ENCODE measurements at regions of chr14 and their contacts with region 1.

Region 1: GRCh38 chr14:52299692-52300278 is 14.3 kb upstream of the PTGER2 start:
- DNase-seq: peak; percentile 43

Region 2: DNA sequence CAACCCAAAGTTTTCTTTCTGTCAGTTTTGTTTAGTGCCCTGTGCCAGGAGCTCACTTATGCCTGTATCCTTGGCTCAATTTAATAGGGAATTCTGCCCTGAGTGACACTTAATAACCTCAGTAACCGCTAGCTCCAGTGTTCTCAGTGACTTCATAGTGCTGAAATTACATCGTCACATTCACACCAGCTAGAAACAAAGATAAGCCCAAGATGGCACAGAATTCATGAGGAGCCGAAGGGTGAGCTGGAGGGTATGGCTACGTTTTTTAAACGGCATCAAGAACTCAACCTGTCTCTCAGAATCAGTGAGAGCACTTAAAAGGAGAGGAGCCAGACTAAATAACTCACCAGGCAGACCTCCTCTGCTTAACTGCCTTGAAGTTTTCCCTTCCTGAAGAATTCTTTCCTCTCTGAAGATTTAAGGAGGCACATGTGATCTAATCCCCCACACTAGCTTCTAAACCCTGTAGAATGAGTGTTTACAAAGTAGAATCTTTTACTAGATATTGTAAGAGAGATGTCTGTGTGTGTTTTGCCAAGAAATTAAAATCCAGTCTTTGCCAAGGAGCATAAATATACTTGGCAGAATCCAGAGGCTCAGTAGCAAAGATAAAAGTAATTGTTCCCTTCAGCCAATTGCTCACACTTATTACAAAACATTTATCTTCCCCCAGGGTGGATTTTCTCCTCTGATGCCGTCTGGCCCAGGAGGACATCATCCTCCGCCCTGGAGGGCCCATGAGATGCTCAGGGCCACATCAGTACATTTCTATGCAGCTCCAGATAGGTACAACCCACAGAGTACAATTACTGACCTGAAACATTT is 51.7 kb after region 1 on chr14:
- CTCF ChIA-PET with region 1: no interaction called
- POLR2A ChIA-PET with region 1: no interaction called
- DNase-seq: no peak

Region 3: GRCh38 chr14:52399921-52400611 is 100.3 kb after region 1 on chr14:
- CTCF ChIA-PET with region 1: no interaction called
- POLR2A ChIA-PET with region 1: no interaction called
- DNase-seq: peak; percentile 65

Region 4: GRCh38 chr14:52522033-52522432 is 222.2 kb after region 1 on chr14:
- CTCF ChIA-PET with region 1: interaction called, 11 read pairs
- POLR2A ChIA-PET with region 1: no interaction called
- DNase-seq: no peak

Measured in HEK293T (cell line).